Right ventricle myocardium inferior (tissue), 1 donor: ENCODE measurements at regions of chr17 and their contacts with region 1.

Region 1: GRCh38 chr17:49556223-49556971 is 19.3 kb upstream of the NXPH3 start:
- DNase-seq: peak; percentile 91
- ATAC-seq: peak; percentile 85

Region 2: GRCh38 chr17:49315551-49316257 is 240.7 kb before region 1 on chr17:
- intact Hi-C with region 1: loop called (anchors 5 kb)
- DNase-seq: no peak
- ATAC-seq: peak; percentile 93

Region 3: DNA sequence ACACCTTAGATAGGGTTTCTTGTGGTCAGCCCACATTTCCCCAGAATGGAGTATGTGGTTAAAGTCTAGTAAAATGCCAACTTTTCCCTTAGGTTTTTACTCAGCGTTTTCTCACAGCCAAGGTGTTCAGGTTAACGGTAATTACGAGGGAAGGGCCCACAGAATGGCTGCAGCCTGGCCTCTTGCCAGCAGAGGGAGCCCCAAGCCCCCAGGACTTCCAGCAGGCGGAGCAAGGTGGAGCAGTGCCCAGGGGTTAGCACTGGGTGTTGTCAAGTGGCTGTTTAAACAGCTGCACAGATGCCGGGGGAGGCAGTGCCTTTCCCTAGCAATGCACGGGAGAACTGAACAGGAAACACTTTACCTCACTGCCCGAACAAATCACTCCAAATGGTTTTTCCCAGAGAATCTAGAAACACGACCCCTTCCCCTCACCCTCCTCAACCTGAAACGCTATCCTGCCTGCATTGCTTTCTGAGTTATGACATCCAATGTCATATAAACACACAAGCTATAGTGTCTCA is 148.4 kb before region 1 on chr17:
- intact Hi-C with region 1: loop called (anchors 2 kb)
- DNase-seq: peak; percentile 88
- ATAC-seq: peak; percentile 63

Region 4: DNA sequence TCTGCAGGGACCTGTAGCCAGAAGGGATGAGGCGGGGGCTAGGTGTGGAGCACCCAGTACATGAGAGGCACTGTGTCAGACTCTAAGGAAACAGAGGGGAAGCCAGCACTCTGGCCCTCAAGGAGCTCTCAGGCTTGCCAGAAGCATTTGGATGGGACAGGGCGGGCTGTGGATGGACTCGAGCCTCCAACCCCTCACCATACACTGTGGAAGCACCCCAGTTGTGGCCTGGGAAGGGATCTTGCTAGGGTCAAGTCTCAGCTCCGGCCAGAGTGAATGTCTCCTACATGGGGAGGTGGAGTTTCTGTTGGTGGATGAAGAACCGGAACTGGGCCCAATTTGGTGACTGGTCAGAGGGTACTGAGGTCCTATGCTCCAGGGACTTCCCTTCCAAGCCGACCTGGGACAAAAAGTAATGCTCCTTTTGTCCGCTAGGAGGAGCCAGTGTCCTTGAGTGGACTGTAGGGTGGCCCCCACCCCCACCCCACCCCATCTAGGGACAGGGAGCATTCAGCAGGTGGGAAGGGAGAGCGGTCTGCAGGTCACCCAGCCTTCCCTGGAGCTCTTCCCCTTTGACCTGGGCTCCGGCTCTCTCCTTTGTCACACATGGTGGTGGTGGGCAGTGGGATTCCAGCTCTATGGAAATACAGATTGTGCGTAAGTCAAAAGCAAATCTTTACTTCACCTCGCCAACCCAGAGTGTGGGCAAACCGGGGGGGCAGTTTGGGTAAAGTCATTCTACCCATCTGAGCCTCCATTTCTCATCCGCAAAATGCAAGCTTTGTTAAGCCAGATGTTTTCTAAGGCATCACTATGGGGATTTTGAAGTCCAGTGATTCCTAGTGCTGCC is 121.4 kb before region 1 on chr17:
- intact Hi-C with region 1: loop called (anchors 2 kb)
- DNase-seq: no peak
- ATAC-seq: no peak

Region 5: GRCh38 chr17:49496183-49496866 is 60.1 kb before region 1 on chr17:
- intact Hi-C with region 1: loop called (anchors 2 kb)
- DNase-seq: peak; percentile 91
- ATAC-seq: peak; percentile 90